ENCODE measurements at regions of chr10 and their contacts with region 1.

Region 1: DNA sequence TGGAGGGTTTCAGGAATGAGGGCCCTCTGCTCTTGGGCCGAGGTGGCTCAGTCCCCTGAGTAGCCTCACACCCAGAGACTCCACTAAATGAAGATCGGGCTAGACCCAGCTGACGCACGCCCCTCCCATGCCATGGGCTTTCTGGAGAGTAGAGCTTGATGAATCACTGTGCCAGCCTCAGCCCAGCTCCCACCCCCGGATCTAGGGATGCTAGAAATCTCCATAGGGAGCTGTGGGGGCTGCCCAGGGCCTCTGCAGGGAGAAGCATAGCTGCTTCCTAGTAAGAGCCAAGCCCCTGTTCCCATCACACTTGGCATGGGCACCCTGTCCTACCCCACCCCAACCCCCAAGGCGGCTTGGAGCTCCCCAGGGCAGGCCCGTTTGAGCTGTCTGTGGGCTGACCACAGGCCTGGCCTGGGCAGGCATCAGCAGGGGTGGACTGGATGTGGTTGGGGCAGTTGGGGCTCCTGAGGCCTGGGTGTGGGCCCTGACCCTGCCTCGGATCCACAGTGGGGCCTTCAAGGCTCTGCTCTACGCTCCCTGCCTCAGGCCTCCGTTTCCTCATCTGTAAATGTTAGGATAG is 121.2 kb downstream of the ZMIZ1 start:
- DNase-seq: no peak
- CTCF ChIP-seq: no peak

Region 2: GRCh38 chr10:79202188-79203013 is 12.5 kb after region 1 on chr10:
- CTCF ChIA-PET with region 1: interaction called, 51 read pairs
- POLR2A ChIA-PET with region 1: no interaction called
- DNase-seq: peak; percentile 65
- CTCF ChIP-seq: peak; percentile 55

Region 3: DNA sequence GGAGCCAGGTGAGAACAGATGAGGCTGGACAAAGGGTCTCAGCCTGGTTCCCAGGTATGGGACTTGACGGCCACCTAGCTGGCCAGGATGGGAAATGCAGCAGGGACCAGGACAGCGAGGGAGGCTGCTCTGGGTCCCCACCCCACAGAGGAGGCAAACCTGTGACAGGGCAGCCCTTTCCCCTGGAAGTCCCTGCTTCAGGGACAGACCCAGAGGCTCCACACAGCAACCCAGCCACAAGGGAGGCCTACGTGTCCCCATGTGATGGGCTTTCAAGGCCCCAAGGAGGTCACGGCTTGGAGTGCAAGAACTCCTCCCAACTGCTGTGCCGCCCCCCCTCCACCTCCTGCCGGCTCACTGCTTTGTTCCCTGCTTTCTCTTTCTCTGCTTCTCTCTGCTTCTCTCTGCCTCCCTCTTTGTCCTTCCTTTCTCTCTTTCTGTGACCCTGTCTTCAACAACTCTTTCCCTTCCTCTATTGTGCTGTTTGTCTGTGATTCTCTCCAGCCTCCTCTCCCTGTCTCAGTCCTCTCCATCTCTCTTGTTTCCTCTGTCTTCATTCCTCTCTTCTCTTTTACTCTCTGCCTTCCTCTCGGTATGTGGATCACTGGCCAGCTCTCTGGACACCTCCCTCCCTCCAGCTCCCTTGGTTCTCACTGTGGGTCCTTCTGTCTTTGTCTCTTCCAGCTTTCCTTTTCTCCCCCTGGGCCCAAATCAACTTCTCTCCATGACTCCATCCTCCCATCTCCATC is 312.8 kb after region 1 on chr10:
- CTCF ChIA-PET with region 1: no interaction called
- POLR2A ChIA-PET with region 1: no interaction called
- DNase-seq: no peak
- CTCF ChIP-seq: peak; percentile 3

Region 4: DNA sequence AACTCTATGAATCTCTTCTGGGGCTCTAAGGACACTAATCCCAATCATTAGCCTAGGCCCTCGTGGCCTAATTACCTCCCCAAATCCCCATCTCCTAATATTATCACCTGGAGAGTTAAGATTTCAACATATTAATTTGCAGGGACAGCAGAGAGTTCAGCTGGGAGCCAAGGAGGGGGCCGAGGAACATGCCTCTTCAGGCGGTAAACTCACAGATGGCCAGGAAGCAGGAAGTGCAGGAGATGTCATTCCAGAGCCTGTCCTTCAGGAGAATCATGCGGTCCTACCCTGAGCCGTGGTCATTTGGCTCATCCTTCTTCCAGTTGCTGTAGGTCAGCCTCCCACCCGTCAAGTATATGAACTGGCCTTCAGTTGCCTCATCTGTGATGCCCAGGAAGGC is 392.2 kb after region 1 on chr10:
- CTCF ChIA-PET with region 1: no interaction called
- POLR2A ChIA-PET with region 1: no interaction called
- DNase-seq: no peak
- CTCF ChIP-seq: no peak

Measured in GM10248 (cell line).